ENCODE measurements at regions of chr11 and their contacts with region 1.

Region 1: GRCh38 chr11:706957-707816 is 1.2 kb downstream of the EPS8L2 start:
- DNase-seq: peak; percentile 94
- ATAC-seq: peak; percentile 56
- H3K4me3 ChIP-seq: peak overlapping the region; percentile 94 to 97 (median 96); a peak in 5 of 6 replicates
- H3K27ac ChIP-seq: peak overlapping the region; percentile 96
- H3K4me1 ChIP-seq: peaks cover 74% of the 10 kb centered on the region
- H3K27me3 ChIP-seq: no peaks in the 10 kb centered on the region; a peak in 1 of 5 replicates
- CTCF ChIP-seq: peak; percentile 59
- EP300 ChIP-seq: peak; percentile 59 to 75
- POLR2A ChIP-seq: no peak
- RAD21 ChIP-seq: peak; percentile 44; the same call in 1 of the 2 replicates

Region 2: DNA sequence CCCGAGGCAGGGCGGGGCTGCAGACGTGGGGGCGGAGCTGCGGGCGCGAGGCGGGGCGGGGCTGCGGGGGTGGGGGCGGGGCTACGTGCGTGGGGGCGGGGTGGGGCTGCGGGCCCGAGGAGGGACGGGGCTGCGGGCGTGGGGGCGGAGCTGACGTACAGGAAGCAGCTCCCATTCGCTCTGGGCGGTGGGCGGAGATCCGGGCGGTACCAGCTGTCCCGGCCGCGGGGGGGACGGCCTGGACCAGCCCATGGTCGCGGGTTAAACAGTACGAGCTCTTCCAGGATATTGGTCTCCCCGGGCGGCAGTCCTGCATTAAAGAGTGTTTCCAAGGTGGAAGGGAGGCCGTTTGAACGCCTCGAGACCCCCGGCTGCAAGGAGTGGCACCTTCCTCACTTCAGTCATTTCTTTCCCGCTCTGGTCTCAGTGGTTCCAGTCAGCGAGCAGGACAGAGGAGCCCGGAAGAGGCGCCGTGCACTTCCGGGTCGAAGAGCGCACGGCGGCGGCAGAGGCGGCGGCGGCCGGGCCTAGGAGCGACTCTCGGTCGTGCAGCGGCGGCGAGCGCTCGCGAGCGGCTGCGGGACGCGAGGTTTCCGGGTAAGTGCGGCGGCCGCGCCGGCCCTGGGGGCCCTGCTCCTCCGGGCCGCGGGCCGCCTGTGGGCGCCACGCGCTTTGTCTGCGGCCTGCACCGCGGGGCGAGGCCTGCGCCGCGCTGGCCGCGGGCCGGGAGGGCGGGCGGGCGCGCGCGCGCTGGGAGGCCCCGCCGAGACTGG is 131.0 kb before region 1 on chr11 and contains the start of gene PHRF1:
- CTCF ChIA-PET with region 1: no interaction called
- POLR2A ChIA-PET with region 1: interaction called, 10 read pairs
- in situ Hi-C with region 1: no loop called
- intact Hi-C with region 1: no loop called
- DNase-seq: peak; percentile 88
- ATAC-seq: peak; percentile 67
- H3K4me3 ChIP-seq: peak within 1 kb of the TSS; percentile 78 to 100 (median 92)
- H3K27ac ChIP-seq: peak within 1 kb of the TSS; percentile 100
- H3K4me1 ChIP-seq: peaks cover 65% of the 10 kb centered on the region
- H3K27me3 ChIP-seq: no peaks in the 10 kb centered on the region; a peak in 2 of 5 replicates
- CTCF ChIP-seq: no peak
- EP300 ChIP-seq: 0 out of 4 replicates have a peak, but pooled peaks of 1 of the 2 experiments have one; percentile 19
- POLR2A ChIP-seq: peak in 1 of 2 experiments; percentile 85; a peak in 2 of 4 replicates
- RAD21 ChIP-seq: no peak; the same call in 1 of the 2 replicates
- total RNA-seq, gene PHRF1: 13.7 and 16.7 TPM in 2 replicates

Region 3: GRCh38 chr11:695538-696248 is 11.5 kb before region 1 on chr11 and contains the start of gene TMEM80:
- CTCF ChIA-PET with region 1: interaction called, 4 read pairs
- POLR2A ChIA-PET with region 1: interaction called, 191 read pairs
- in situ Hi-C with region 1: no loop called
- intact Hi-C with region 1: no loop called
- DNase-seq: peak; percentile 93
- ATAC-seq: peak; percentile 84
- H3K4me3 ChIP-seq: peak within 1 kb of the TSS; percentile 86 to 87 (median 87)
- H3K27ac ChIP-seq: peak within 1 kb of the TSS; percentile 99
- H3K4me1 ChIP-seq: peaks cover 61% of the 10 kb centered on the region
- H3K27me3 ChIP-seq: no peaks in the 10 kb centered on the region; a peak in 1 of 5 replicates
- CTCF ChIP-seq: no peak; the same call in 1 of the 2 replicates
- EP300 ChIP-seq: no peak
- POLR2A ChIP-seq: peak in 1 of 2 experiments; percentile 32; a peak in 2 of 4 replicates
- RAD21 ChIP-seq: peak; percentile 43
- total RNA-seq, gene TMEM80: 2.7 and 5.6 TPM in 2 replicates

Region 4: DNA sequence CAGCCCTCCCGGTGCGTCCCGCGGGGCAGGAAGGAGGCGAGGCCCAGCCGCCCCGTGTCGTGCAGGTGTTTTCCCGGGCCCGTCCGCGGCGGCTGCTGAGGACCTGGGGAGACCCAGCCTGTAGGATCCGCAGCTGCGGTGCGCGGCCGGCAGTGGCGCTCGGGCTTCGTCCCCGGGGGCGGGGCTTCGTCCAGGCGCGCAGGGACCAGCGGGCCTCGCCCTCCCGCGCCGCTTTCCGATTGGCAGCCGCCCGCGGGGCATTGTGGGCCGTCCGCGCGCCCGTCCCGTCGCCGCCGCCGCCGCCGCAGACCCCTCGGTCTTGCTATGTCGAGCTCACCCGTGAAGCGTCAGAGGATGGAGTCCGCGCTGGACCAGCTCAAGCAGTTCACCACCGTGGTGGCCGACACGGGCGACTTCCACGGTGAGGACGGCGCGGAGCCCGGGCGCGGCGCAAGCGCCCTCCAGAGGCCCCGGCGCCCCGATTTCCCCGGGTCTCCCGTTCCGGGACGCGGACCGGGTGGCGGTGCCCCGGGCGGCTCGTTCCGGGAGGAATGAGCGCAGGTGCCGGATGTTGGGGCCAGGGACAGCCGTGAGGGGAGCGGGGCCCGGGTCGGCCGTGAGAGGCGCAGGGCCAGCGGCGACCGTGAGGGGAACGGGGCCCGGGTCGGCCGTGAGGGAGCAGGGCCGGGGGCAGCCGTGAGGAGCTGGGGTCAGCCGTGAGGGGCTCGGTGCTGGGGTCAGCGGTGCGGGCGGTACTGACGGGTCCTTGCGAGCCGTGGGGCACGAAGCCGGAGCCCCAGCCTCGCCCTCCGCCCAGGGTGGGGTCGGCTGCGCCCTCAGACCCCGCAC is 40.2 kb after region 1 on chr11 and contains the start of gene TALDO1:
- CTCF ChIA-PET with region 1: no interaction called
- POLR2A ChIA-PET with region 1: interaction called, 33 read pairs
- in situ Hi-C with region 1: no loop called
- intact Hi-C with region 1: no loop called
- DNase-seq: peak; percentile 76
- ATAC-seq: peak; percentile 95
- H3K4me3 ChIP-seq: peak within 1 kb of the TSS; percentile 80 to 95 (median 85)
- H3K27ac ChIP-seq: peak within 1 kb of the TSS; percentile 73
- H3K4me1 ChIP-seq: peaks cover 37% of the 10 kb centered on the region
- H3K27me3 ChIP-seq: no peaks in the 10 kb centered on the region; a peak in 1 of 5 replicates
- CTCF ChIP-seq: peak; percentile 47; the same call in 1 of the 2 replicates
- EP300 ChIP-seq: no peak
- POLR2A ChIP-seq: peak; percentile 33 to 82; a peak in 2 of 4 replicates
- RAD21 ChIP-seq: peak; percentile 12; the same call in 1 of the 2 replicates
- total RNA-seq, gene TALDO1: 240 and 336 TPM in 2 replicates

Region 5: DNA sequence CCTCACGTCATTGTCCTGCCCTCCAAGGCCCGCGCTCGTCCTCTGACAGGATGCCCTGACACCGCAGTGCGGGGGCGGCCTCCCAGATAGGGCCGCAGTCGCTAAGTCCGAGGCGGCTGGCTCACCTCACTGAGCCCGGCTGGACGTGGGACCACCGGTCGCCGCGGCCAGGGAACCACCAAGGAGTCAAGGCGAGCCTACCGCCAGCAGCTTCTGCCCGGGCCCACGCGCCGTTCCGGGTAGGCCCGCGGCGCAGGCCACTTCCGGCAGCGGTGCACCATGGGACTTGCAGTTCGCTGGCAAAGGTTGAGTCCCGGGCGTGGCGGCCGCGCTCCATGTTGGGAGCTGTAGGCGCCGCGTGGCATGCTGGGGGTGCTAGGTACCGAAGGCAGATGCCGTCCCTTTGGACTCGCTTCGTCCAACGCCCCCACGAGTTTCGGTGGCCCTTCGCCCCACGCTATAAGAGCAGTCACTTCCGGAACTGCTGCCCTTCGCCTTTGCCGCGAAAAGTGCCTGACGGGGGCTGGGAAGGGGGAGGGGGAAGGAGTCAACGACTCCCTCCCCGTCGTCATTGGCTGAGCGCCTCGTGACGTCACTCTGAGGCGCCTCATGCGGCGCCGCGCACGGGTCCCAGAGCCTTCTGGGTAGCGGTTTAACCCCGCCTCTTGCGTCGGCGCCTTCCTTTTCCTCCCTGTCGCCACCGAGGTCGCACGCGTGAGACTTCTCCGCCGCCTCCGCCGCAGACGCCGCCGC is 102.3 kb after region 1 on chr11 and contains the start of gene RPLP2:
- CTCF ChIA-PET with region 1: no interaction called
- POLR2A ChIA-PET with region 1: interaction called, 15 read pairs
- in situ Hi-C with region 1: no loop called
- intact Hi-C with region 1: no loop called
- DNase-seq: peak; percentile 93
- ATAC-seq: peak; percentile 82
- H3K4me3 ChIP-seq: peak within 1 kb of the TSS; percentile 97 to 100 (median 99)
- H3K27ac ChIP-seq: peak within 1 kb of the TSS; percentile 95
- H3K4me1 ChIP-seq: peaks cover 52% of the 10 kb centered on the region
- H3K27me3 ChIP-seq: no peaks in the 10 kb centered on the region; a peak in 1 of 5 replicates
- CTCF ChIP-seq: no peak; the same call in none of the 2 replicates
- EP300 ChIP-seq: peak in 1 of 2 experiments; percentile 7; a peak in 1 of 4 replicates
- POLR2A ChIP-seq: peak in 1 of 2 experiments; percentile 88; a peak in 2 of 4 replicates
- RAD21 ChIP-seq: peak; percentile 18; the same call in 1 of the 2 replicates
- total RNA-seq, gene RPLP2: 2,049 and 2,106 TPM in 2 replicates